ENCODE measurements at regions of chr1 and their contacts with region 1.

Region 1: GRCh38 chr1:210541680-210542358 is 213.1 kb downstream of the HHAT start:
- DNase-seq: peak; percentile 5
- ATAC-seq: no peak
- H3K4me3 ChIP-seq: no peak overlapping the region
- H3K27ac ChIP-seq: no peak overlapping the region
- H3K4me1 ChIP-seq: no peaks in the 10 kb centered on the region
- H3K27me3 ChIP-seq: no peaks in the 10 kb centered on the region
- CTCF ChIP-seq: no peak
- POLR2A ChIP-seq: no peak
- RAD21 ChIP-seq: no peak

Region 2: DNA sequence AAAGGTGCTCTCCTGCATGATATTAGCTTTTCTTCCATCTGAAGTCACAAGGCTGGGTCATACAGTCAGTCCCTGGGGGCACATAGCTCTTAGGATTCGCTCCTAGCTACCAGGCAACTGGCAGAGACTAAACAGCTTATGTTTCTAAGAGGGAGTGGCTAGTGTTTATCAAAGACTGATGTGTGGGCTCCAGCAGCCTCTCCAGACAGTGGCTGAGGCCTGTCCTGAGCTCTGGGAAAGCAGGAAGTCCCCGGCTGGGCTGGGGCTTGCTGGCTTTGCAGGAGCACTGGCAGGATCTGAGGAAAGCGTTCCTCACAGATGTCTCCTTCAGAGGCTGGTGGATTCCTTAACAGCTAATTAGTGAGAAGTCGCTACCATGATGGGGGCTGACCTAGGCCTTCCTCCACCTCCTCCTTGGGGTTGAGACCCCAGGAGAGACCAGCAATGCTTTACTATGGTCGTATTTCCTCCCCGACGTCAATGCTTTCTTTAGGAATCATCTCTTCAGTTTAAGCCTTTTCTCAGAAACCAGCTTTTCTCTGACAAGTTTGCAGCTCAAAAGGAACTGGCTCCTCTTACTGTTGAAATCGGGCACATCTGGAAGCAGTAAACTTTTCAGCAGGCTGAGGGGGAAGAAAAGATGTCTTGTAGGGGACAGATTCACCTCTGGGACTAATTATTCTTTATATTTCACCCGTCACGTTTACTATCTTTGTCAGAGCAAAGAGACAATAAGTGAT is 246.7 kb before region 1 on chr1:
- CTCF ChIA-PET with region 1: no interaction called
- POLR2A ChIA-PET with region 1: no interaction called
- dilution Hi-C with region 1: no loop called
- in situ Hi-C with region 1: no loop called
- intact Hi-C with region 1: no loop called
- DNase-seq: no peak
- ATAC-seq: peak; percentile 44
- H3K4me3 ChIP-seq: no peak overlapping the region
- H3K27ac ChIP-seq: no peak overlapping the region
- H3K4me1 ChIP-seq: peaks cover 3% of the 10 kb centered on the region; the same call in 1 of the 2 replicates
- H3K27me3 ChIP-seq: peaks cover 32% of the 10 kb centered on the region
- CTCF ChIP-seq: no peak
- POLR2A ChIP-seq: no peak
- RAD21 ChIP-seq: no peak

Region 3: DNA sequence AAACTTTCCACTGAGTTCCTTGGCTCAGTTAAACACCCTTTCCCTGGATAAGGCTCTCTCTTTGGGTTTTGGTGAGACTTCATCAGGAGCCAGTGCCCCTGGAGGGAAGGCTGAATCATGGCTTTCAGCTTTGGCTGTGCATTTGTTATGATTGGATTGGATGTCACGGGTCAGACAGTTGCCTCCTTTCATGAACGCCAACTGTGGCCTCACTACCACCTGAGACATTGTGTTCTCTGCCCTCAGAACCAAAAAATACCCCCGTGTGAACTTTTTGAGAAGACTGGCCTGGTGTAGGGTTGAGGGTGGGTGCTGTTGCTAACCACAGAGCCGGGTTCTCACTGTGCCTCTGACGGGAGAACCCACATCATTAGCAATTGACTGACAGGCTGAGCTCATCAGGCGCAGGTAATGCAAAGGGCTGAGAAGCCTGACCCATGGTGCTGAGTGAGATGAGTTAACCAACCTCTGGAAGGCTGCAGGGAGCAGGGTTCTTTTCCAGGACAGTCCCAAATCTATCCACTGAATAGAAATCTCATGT is 147.5 kb before region 1 on chr1:
- CTCF ChIA-PET with region 1: no interaction called
- POLR2A ChIA-PET with region 1: no interaction called
- dilution Hi-C with region 1: no loop called
- in situ Hi-C with region 1: no loop called
- intact Hi-C with region 1: no loop called
- DNase-seq: peak; percentile 27
- ATAC-seq: no peak
- H3K4me3 ChIP-seq: no peak overlapping the region
- H3K27ac ChIP-seq: no peak overlapping the region
- H3K4me1 ChIP-seq: peaks cover 11% of the 10 kb centered on the region
- H3K27me3 ChIP-seq: no peaks in the 10 kb centered on the region
- CTCF ChIP-seq: no peak
- POLR2A ChIP-seq: no peak
- RAD21 ChIP-seq: no peak

Region 4: DNA sequence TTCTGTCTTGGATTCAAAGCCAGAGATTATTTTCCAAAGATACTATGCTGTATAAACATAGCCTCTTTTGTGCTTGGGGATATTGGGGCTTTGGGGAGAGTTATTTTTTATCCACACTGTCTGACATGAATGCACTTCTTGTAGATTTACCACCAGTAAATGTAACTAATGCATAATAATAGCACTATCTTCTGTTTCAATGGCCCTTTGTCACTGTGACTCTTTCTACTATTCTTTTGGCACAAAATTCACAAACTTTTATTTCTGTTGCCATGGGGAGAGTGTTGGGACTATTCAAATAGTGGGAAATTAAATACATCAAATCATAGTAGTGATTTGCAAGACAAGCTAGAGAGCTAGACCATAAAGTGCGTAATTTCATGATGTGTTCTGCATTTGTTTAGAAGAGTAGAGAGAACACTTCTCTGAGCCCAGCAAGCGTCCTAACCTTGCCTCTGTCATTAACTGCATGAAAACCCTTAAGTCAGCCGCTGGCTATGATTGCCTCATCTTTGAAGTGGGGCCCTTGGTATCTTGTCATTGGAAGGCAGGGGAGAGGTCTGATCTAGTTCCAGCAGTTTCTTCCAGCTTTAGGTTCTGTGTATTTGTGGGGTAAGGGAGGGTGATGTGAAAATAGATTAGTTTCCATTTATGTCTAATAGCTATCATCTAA is 58.7 kb before region 1 on chr1:
- CTCF ChIA-PET with region 1: no interaction called
- POLR2A ChIA-PET with region 1: no interaction called
- dilution Hi-C with region 1: no loop called
- in situ Hi-C with region 1: no loop called
- intact Hi-C with region 1: loop called (anchors 5 kb)
- DNase-seq: no peak
- ATAC-seq: no peak
- H3K4me3 ChIP-seq: no peak overlapping the region
- H3K27ac ChIP-seq: no peak overlapping the region
- H3K4me1 ChIP-seq: no peaks in the 10 kb centered on the region
- H3K27me3 ChIP-seq: peaks cover 1% of the 10 kb centered on the region
- CTCF ChIP-seq: no peak
- POLR2A ChIP-seq: no peak
- RAD21 ChIP-seq: no peak